Activated naive CD4-positive, alpha-beta T cell treated with anti-CD3 and anti-CD28 coated beads for 36 hours (primary cell): ENCODE measurements at regions of chr4 and their contacts with region 1.

Region 1: GRCh38 chr4:11341337-11342043 is 87.2 kb downstream of the HS3ST1 start:
- DNase-seq: no peak
- H3K4me3 Mint-ChIP-seq: no peak overlapping the region
- H3K27ac Mint-ChIP-seq: no peak overlapping the region
- H3K4me1 Mint-ChIP-seq: no peaks in the 10 kb centered on the region
- H3K27me3 Mint-ChIP-seq: peaks cover 2% of the 10 kb centered on the region

Region 2: GRCh38 chr4:10959586-10959985 is 381.9 kb before region 1 on chr4:
- CTCF ChIA-PET with region 1: no interaction called
- intact Hi-C with region 1: no loop called
- DNase-seq: no peak
- H3K4me3 Mint-ChIP-seq: no peak overlapping the region
- H3K27ac Mint-ChIP-seq: no peak overlapping the region
- H3K4me1 Mint-ChIP-seq: peaks cover 5% of the 10 kb centered on the region
- H3K27me3 Mint-ChIP-seq: peaks cover 2% of the 10 kb centered on the region

Region 3: DNA sequence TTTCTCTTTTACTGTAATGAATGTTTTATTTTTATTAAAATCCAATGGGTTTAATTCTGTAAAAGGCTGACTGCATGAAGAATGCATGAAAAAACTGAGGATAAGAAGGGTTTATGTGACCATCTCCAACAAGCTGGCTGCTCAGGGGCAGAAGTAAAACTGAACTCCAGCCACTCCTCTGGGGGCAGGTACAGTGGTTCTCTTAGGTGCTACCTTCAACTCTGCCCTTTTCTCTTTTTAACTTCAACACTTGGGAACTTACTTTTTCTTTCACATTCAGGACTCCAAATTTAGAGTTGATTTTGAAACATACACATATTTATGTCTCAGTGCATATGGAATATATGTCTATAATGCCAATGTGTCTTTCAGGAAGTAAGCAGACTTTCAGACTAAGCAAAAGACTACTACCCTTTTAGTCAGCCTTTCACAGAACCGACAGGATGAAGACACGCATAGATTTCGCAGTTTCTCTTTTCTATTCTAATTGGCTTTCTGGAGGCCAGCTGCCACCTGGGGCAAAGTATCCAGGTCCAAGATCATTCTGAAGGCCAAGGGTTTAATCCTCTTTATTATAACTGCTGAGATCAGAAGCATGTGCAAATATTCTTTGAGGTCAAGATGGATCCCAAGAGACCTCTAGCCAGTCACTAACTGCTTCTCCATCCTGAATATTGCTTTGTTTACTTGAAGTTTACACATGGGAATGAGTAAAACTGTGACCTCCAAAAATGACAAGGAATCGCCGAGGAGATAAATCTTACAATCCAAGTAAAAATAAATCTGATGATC is 56.5 kb after region 1 on chr4:
- CTCF ChIA-PET with region 1: no interaction called
- intact Hi-C with region 1: loop called (anchors 10 kb)
- DNase-seq: no peak
- H3K4me3 Mint-ChIP-seq: no peak overlapping the region
- H3K27ac Mint-ChIP-seq: no peak overlapping the region
- H3K4me1 Mint-ChIP-seq: no peaks in the 10 kb centered on the region
- H3K27me3 Mint-ChIP-seq: no peaks in the 10 kb centered on the region